MCF 10A (cell line): ENCODE measurements at regions of chr1 and their contacts with region 1.

Region 1: GRCh38 chr1:153192697-153193096 is 10.5 kb upstream of the LELP1 start:
- DNase-seq: peak; percentile 77
- H3K4me3 Mint-ChIP-seq: no peak overlapping the region
- H3K27ac Mint-ChIP-seq: no peak overlapping the region
- H3K4me1 Mint-ChIP-seq: peaks cover 8% of the 10 kb centered on the region
- H3K27me3 Mint-ChIP-seq: peaks cover 27% of the 10 kb centered on the region
- CTCF ChIP-seq: peak; percentile 98

Region 2: DNA sequence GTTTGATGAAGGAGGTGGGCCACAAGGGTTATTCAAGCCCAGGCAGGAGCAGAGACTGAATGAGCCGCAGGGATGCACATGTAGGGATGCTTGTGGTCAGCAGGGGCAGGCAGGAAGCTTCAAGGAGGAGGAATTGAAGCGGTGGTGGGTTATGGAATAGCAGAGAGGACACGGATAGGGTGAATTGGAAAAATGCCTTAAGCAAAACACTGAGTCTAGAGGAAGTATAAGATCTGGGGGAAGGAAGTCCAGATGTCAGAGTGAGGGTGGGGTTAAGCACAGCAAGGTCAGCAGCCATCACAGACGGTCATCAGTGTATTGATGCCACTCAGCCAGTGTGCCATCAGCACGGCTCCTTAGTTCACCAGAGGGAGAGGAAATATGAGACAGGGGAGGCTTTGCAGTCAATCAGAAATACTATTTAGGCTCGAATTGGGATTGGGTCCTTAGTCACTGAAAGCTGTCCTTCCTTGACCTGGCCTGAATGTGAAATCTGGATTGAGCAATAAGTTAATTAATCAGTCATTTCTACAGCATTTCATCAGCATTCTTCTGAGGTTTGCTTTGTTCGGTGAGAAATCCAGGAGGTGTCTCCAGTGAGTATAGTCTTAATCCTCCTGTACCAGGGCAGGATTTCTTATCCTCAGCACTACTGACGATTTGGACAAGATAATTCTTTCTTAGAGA is 423.7 kb before region 1 on chr1:
- CTCF ChIA-PET with region 1: interaction called, 15 read pairs
- POLR2A ChIA-PET with region 1: no interaction called
- intact Hi-C with region 1: loop called (anchors 10 kb)
- DNase-seq: peak; percentile 63
- H3K4me3 Mint-ChIP-seq: no peak overlapping the region
- H3K27ac Mint-ChIP-seq: peak overlapping the region; percentile 5
- H3K4me1 Mint-ChIP-seq: peaks cover 29% of the 10 kb centered on the region
- H3K27me3 Mint-ChIP-seq: no peaks in the 10 kb centered on the region
- CTCF ChIP-seq: peak; percentile 13

Region 3: DNA sequence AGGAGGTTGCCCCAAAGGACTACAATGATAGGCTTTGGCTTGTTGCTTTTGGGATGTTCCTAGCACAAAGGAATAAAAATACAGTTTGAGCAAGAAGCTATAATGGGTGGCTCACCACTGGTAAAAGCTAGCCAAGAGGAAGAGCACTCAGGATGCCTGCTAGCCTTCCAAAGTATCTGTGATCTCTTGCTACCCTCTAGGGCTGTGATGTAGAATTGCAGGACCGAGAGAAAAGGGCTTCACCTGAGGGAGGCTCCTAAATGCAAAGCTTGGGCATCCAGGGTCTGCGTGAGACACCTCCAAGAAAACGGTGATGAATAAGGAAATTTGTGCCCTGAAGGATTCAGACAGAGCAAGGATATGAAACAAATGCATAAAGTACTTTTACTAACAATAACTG is 266.6 kb before region 1 on chr1:
- CTCF ChIA-PET with region 1: interaction called, 172 read pairs
- POLR2A ChIA-PET with region 1: interaction called, 15 read pairs
- intact Hi-C with region 1: loop called (anchors 1 kb)
- DNase-seq: peak; percentile 82
- H3K4me3 Mint-ChIP-seq: no peak overlapping the region
- H3K27ac Mint-ChIP-seq: no peak overlapping the region
- H3K4me1 Mint-ChIP-seq: peaks cover 11% of the 10 kb centered on the region
- H3K27me3 Mint-ChIP-seq: no peaks in the 10 kb centered on the region
- CTCF ChIP-seq: peak; percentile 98

Region 4: DNA sequence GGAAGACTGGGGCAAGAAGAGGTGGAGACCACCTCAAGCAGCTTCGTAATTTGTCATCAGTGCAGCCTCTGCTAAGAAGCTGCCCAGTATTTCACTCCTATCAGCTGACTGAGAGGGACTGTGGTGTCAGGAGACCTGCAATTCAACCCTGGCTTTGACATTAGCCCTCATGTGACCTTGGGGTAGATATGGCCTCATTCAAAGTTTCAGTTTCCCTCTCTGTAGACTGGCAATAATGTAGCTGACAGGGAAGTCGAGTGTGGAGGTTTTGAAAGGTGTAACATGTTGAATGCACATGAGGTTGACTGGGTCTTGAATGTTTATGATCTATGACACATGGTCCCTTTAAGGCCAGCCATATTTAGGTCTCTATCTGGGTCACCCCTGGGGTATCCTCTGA is 224.4 kb before region 1 on chr1:
- CTCF ChIA-PET with region 1: interaction called, 20 read pairs
- POLR2A ChIA-PET with region 1: no interaction called
- intact Hi-C with region 1: no loop called
- DNase-seq: no peak
- H3K4me3 Mint-ChIP-seq: no peak overlapping the region
- H3K27ac Mint-ChIP-seq: no peak overlapping the region
- H3K4me1 Mint-ChIP-seq: peaks cover 21% of the 10 kb centered on the region
- H3K27me3 Mint-ChIP-seq: no peaks in the 10 kb centered on the region
- CTCF ChIP-seq: no peak

Region 5: GRCh38 chr1:153174624-153175023 is 18.1 kb before region 1 on chr1:
- CTCF ChIA-PET with region 1: interaction called, 17 read pairs
- POLR2A ChIA-PET with region 1: interaction called, 4 read pairs
- intact Hi-C with region 1: no loop called
- DNase-seq: peak; percentile 9
- H3K4me3 Mint-ChIP-seq: no peak overlapping the region
- H3K27ac Mint-ChIP-seq: no peak overlapping the region
- H3K4me1 Mint-ChIP-seq: peaks cover 8% of the 10 kb centered on the region
- H3K27me3 Mint-ChIP-seq: no peaks in the 10 kb centered on the region
- CTCF ChIP-seq: no peak

Region 6: DNA sequence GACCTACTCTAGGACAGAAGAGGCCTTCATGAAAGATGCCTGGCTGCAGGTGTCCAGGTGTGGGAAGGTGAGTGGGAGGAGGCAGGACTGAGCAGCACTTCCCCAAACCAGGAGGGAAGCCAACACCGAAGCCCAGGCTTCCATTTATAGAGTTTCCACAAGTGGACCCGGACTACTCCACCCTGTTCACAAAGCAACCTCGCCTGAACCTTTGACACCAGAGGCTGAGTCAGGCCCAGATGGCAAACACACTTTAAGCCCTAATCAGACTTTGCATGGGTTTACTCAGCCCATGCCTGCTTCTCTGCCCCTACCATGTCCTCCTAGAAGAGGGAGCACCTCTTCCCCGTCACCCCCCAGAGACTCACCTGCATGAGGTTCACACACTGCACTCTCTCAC is 38.7 kb after region 1 on chr1:
- CTCF ChIA-PET with region 1: interaction called, 185 read pairs
- POLR2A ChIA-PET with region 1: no interaction called
- intact Hi-C with region 1: no loop called
- DNase-seq: no peak
- H3K4me3 Mint-ChIP-seq: no peak overlapping the region
- H3K27ac Mint-ChIP-seq: no peak overlapping the region
- H3K4me1 Mint-ChIP-seq: peaks cover 8% of the 10 kb centered on the region
- H3K27me3 Mint-ChIP-seq: peaks cover 14% of the 10 kb centered on the region
- CTCF ChIP-seq: no peak

Region 7: DNA sequence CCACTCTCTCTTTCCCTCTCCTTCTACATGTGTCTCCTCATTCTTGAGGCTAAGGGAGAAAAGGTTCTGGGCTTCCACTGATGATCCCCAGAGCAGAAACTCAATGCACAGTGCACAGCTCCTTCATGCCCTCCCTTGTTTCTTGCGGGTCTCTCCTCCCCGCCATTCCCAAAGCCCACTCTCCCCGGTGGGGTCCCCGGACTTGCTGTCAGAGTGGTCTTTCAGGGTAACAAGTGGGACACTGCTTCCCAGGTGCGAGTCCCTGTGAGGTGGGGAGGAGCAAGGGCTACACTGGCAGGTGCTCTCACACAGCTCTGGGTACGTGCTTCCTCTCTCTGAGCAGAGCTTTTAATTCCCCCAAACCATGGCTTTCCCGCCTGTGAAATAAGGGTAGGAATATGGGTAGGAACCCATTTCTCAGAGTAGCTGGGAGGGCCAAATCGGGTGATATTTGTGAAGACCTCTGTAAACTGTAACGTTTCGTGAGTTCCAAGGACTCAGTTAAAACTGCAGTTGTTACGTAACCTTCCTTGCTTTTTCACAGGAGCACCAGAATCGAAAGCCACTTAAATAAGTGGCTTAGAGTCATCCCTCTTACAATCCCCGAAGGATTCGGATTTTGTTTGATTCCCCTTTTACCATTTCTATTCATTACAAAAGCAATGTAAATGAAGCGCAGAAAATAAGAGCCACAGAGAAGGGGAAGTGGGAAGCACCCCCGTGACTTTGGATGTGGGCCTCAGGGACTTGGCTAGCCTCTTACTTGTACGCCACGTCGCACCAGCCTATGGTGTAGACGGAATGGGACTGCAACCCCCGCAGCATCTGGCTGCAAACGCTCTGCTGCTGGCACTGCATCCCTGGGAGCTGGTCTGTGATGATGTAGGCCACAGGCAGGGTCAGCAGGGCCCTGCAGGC is 113.9 kb after region 1 on chr1:
- CTCF ChIA-PET with region 1: no interaction called
- POLR2A ChIA-PET with region 1: no interaction called
- intact Hi-C with region 1: no loop called
- DNase-seq: no peak
- H3K4me3 Mint-ChIP-seq: no peak overlapping the region
- H3K27ac Mint-ChIP-seq: no peak overlapping the region
- H3K4me1 Mint-ChIP-seq: no peaks in the 10 kb centered on the region
- H3K27me3 Mint-ChIP-seq: peaks cover 58% of the 10 kb centered on the region
- CTCF ChIP-seq: no peak